GM10248 (cell line): ENCODE measurements at regions of chr3 and their contacts with region 1.

Region 1: DNA sequence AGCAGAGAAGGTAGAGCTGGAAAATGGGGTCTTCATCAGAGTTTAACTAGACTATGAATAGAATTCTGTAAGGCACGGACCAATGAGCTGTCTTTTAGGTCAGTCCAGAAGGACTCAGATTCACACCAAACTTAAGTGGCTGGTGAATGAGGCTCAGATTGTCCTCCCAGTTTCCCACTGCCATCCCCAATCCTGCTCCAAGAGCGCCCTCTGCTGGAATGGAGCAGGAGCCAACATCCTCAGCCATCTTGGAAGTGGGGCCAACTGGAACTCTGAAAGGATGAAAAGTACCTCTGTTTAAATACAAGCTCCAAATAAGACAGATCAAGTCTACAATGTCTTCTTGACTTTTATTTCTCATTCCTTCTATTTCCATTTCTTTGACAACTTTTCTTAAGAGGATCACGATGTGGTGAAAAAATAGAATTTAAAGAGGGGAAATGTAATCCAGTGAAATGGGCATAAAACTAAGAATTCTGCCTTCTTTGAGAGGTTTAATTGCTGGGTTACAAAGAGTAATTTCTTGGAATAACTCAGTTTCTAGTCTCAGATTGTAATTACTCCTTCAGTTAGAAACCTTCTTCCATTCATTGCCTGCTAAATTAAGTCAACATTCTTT is 217.1 kb upstream of the TPRG1 start:
- DNase-seq: peak; percentile 60
- CTCF ChIP-seq: peak; percentile 86

Region 2: DNA sequence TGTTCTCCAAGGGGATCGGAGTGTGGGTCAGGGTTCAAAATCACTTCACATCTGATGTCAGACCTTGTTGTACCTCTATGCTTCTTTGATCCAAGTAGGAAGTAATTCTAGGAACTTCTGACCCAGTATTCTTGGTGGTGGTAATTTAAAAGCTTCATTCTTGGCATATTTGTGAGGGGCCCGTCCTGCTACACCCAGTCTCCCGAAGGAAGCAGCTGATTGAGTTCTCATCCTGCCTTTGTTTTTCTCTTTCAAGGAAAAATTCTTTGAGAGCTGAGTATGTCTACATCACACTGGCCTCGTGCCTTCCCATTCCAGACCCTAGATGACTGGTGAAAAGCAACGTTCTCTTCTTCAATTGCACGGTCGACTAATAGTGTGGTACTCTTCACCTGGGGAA is 17.3 kb before region 1 on chr3:
- CTCF ChIA-PET with region 1: interaction called, 32 read pairs
- POLR2A ChIA-PET with region 1: no interaction called
- DNase-seq: no peak
- CTCF ChIP-seq: no peak

Region 3: DNA sequence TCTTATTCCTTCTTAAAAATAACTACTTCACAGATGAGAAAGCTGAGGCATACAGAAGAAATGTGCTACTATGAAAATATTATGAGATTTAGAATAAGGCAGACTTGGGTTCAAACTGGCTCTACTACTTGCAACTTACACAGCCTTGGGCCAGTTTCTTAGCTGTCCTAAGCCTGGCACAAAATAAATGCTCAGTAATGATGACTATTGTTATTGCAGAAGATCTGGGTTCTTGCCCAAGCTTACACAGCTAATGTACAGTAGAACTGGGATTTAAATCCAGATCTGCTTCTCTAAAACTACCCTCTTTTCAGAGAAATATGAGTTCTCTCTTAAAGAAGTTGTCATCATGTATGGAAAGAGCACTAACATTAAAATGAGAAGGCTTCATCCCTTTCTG is 11.1 kb before region 1 on chr3:
- CTCF ChIA-PET with region 1: interaction called, 22 read pairs
- POLR2A ChIA-PET with region 1: no interaction called
- DNase-seq: no peak
- CTCF ChIP-seq: no peak

Region 4: DNA sequence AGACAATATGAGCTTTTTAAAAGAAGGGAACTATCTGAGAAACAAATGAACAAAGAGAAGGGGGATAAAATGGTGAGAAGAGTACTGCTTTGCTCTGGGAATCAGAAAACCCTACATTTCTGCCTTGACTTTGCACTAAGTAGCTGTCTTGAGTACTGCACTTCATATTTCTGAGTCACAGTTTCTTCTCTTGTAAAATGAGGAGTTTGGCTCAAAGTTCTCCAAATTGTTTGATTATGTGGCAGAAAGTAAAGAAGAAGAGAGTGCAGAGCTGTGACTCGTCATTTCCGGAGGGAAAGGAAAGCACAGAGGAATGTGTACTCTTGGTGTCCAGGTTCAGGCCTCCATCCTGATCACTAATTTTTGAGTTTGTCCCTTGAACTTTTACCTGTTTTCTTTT is 731.2 kb after region 1 on chr3:
- CTCF ChIA-PET with region 1: no interaction called
- POLR2A ChIA-PET with region 1: no interaction called
- DNase-seq: no peak
- CTCF ChIP-seq: no peak